Lower leg skin (tissue), 4 donors: ENCODE measurements at regions of chr10 and their contacts with region 1.

Region 1: DNA sequence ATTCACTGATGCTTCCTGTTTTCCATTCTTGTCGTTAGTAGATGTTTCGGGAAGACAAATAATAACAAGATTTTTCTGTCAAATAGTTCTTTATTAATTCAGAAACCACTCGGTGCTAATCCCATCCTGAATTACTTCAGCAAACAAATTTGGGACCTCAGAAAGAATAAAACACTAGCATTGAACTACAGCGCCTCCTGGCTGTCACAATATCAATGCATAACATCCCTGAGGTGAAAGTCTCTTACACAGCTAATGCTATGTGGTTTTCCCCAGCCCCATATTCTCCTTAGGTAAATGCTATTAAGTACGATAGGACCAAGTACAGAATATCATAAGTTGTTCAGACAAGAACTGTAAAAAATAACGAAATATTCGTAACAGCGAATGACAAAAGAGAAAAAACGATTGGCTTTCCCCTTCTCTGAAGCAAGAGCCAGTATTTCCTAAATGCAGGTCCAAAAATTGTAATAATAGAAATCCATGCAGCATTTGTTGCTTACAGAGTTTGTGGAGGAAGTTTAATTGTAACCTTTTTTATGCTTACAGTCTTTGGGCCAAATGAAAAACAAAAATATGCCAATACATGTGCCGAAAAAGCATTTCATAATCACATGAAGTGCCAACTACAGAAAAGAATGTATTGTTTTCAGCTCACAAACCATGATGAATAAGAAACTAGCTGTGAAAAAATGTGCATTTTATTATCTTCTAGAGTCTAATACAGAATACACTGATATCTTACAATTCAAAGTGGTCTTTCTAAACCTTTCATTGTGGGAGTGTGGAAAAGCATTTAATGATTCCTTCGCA is 47.3 kb downstream of the MYPN start:
- DNase-seq: peak in 1 of 2 donors; percentile 70
- H3K4me3 ChIP-seq: no peak overlapping the region
- CTCF ChIP-seq: peak in 1 of 3 donors; percentile 65
- POLR2A ChIP-seq: no peak

Region 2: GRCh38 chr10:66695046-66695445 is 1461.5 kb before region 1 on chr10:
- intact Hi-C with region 1: no loop called
- DNase-seq: no peak
- H3K4me3 ChIP-seq: no peak overlapping the region
- CTCF ChIP-seq: no peak
- POLR2A ChIP-seq: no peak

Region 3: DNA sequence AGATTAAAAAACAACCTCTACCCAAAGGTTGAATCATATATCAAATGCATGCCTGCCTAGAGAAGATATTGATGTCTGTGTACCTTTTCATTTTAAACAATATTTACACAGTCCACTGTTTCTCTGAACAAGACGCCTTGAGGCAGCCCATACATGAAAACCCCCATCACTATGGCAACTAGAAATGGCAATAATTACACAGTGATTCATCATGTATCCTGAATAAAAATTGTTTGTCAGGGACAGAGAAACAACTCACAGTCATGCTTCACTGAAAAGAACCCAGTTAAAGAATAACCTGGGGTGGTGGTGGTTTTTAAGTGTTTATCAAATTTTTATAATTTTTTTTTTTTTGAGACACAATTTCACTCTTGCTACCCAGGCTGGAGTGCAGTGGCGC is 338.3 kb before region 1 on chr10:
- intact Hi-C with region 1: no loop called
- DNase-seq: no peak
- H3K4me3 ChIP-seq: no peak overlapping the region
- CTCF ChIP-seq: no peak
- POLR2A ChIP-seq: no peak

Region 4: DNA sequence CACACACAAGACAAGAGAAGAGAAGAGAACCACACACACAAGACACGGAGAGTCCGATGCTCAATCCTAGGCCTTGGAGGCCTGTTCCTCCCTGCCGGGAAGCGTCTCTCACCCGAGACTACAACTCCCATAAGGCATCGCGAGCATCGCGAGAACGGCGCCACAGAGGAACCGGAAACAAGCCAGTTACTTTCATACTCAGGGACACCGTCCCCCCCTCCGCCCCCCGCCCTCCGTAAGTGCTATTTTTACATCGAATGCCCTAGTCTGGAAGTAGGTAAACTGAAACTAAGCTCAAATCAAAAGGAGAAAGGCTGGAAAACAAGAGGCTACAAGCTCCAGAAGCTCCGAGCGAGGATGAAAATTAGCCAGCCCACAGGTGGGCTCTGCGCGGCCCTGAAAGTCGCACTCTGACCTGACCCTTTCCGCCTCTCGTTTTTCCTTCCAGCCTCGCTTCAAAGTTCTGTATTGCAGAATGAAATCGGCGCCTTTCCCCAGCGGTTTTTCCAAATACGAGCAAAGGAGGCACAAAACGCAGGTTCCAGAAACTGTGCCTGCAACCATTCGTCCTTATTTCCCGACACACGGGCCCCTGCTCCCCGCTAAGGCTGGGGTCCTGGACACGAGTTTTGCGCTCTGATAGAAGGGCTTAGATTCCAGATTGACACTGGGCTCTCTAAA is 307.1 kb before region 1 on chr10:
- intact Hi-C with region 1: loop called (anchors 10 kb)
- DNase-seq: peak; percentile 92 to 98
- H3K4me3 ChIP-seq: peak overlapping the region; percentile 64
- CTCF ChIP-seq: no peak
- POLR2A ChIP-seq: no peak

Region 5: DNA sequence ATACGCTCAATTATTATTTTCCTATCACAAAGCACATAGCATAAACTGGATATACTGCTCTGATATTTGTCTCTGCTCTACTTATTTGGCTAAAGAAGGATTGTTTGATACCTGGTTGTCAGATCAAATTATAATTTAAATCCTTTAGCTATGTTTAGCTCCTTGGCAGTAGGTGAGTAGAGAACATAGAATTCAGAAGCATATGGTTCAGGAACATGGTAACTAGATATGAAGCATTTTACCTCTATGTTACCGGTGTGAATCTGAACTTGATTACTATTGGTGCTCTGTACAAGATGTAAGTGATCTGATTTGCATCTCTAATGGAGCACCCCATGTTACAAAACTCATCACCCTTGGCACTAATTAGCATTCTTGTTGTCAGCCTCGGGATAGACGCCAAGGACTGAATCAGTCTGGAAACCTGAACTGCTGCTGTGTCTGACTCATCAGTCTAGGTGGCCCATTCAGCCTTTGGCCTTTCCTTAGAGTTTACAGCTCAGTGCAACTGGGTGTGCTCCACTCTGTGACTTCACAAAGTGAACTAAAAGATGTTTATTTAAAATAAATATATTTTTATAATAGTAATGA is 59.6 kb before region 1 on chr10:
- intact Hi-C with region 1: loop called (anchors 10 kb)
- DNase-seq: peak in 1 of 2 donors; percentile 68
- H3K4me3 ChIP-seq: no peak overlapping the region
- CTCF ChIP-seq: no peak
- POLR2A ChIP-seq: no peak

Region 6: GRCh38 chr10:68526626-68527307 is 370.2 kb after region 1 on chr10:
- intact Hi-C with region 1: no loop called
- DNase-seq: peak in 1 of 2 donors; percentile 16
- H3K4me3 ChIP-seq: peak overlapping the region; percentile 100
- CTCF ChIP-seq: no peak
- POLR2A ChIP-seq: no peak